ENCODE measurements at regions of chr12 and their contacts with region 1.

Region 1: GRCh38 chr12:104958009-104958945 is at the start of gene SLC41A2:
- DNase-seq: peak; percentile 88
- H3K4me3 Mint-ChIP-seq: peak within 1 kb of the TSS; percentile 86
- H3K27ac Mint-ChIP-seq: peak within 1 kb of the TSS; percentile 77
- H3K4me1 Mint-ChIP-seq: peaks cover 25% of the 10 kb centered on the region
- H3K27me3 Mint-ChIP-seq: peaks cover 3% of the 10 kb centered on the region
- total RNA-seq, gene SLC41A2: 7.6 to 7.7 TPM

Region 2: DNA sequence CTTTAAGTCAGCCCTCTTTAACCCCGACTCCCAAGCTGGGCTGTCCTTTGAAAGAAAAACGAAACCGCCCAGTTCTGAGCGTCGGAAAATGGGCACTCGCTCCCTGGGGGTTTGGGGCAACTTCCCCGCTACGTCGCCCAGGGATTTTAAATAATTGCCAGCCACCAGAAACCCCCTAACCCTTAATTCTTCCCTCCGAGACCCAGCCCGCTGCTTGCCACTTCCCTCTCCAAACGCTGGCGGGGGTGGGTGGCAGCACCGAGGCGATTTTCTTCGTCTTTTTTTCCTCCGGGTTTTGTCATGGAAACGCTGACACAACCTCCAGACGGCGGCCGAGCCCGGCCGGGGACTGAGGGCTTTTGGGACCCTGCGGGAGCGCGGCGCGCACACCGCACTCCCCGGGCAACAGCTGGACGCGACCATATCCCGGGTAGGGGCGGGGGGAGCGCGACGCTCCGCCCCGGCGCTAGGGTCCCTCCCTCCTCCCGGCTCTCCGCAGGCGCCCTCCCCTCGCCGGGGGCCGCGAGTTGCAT is 501.8 kb before region 1 on chr12 and contains the start of gene CHST11:
- CTCF ChIA-PET with region 1: interaction called, 4 read pairs
- POLR2A ChIA-PET with region 1: no interaction called
- intact Hi-C with region 1: loop called (anchors 5 kb)
- DNase-seq: peak; percentile 89
- H3K4me3 Mint-ChIP-seq: peak within 1 kb of the TSS; percentile 99
- H3K27ac Mint-ChIP-seq: peak within 1 kb of the TSS; percentile 97
- H3K4me1 Mint-ChIP-seq: peaks cover 29% of the 10 kb centered on the region
- H3K27me3 Mint-ChIP-seq: no peaks in the 10 kb centered on the region
- total RNA-seq, gene CHST11: 58.3 to 59.0 TPM

Region 3: GRCh38 chr12:104695453-104696148 is 262.7 kb before region 1 on chr12:
- CTCF ChIA-PET with region 1: no interaction called
- POLR2A ChIA-PET with region 1: no interaction called
- intact Hi-C with region 1: loop called (anchors 5 kb)
- DNase-seq: peak; percentile 94
- H3K4me3 Mint-ChIP-seq: peak overlapping the region; percentile 16
- H3K27ac Mint-ChIP-seq: peak overlapping the region; percentile 92
- H3K4me1 Mint-ChIP-seq: peaks cover 74% of the 10 kb centered on the region
- H3K27me3 Mint-ChIP-seq: no peaks in the 10 kb centered on the region

Region 4: GRCh38 chr12:104930388-104931326 is 27.6 kb before region 1 on chr12:
- CTCF ChIA-PET with region 1: interaction called, 11 read pairs
- POLR2A ChIA-PET with region 1: interaction called, 4 read pairs
- intact Hi-C with region 1: loop called (anchors 1 kb)
- DNase-seq: peak; percentile 73
- H3K4me3 Mint-ChIP-seq: no peak overlapping the region
- H3K27ac Mint-ChIP-seq: peak overlapping the region; percentile 39
- H3K4me1 Mint-ChIP-seq: peaks cover 25% of the 10 kb centered on the region
- H3K27me3 Mint-ChIP-seq: no peaks in the 10 kb centered on the region

Region 5: GRCh38 chr12:105030820-105031807 is 72.8 kb after region 1 on chr12:
- CTCF ChIA-PET with region 1: interaction called, 5 read pairs
- POLR2A ChIA-PET with region 1: no interaction called
- intact Hi-C with region 1: loop called (anchors 1 kb)
- DNase-seq: no peak
- H3K4me3 Mint-ChIP-seq: no peak overlapping the region
- H3K27ac Mint-ChIP-seq: peak overlapping the region; percentile 3
- H3K4me1 Mint-ChIP-seq: peaks cover 31% of the 10 kb centered on the region
- H3K27me3 Mint-ChIP-seq: no peaks in the 10 kb centered on the region

Region 6: GRCh38 chr12:105064564-105065178 is 106.4 kb after region 1 on chr12:
- CTCF ChIA-PET with region 1: no interaction called
- POLR2A ChIA-PET with region 1: no interaction called
- intact Hi-C with region 1: no loop called
- DNase-seq: no peak
- H3K4me3 Mint-ChIP-seq: no peak overlapping the region
- H3K27ac Mint-ChIP-seq: no peak overlapping the region
- H3K4me1 Mint-ChIP-seq: no peaks in the 10 kb centered on the region
- H3K27me3 Mint-ChIP-seq: peaks cover 2% of the 10 kb centered on the region

Region 7: DNA sequence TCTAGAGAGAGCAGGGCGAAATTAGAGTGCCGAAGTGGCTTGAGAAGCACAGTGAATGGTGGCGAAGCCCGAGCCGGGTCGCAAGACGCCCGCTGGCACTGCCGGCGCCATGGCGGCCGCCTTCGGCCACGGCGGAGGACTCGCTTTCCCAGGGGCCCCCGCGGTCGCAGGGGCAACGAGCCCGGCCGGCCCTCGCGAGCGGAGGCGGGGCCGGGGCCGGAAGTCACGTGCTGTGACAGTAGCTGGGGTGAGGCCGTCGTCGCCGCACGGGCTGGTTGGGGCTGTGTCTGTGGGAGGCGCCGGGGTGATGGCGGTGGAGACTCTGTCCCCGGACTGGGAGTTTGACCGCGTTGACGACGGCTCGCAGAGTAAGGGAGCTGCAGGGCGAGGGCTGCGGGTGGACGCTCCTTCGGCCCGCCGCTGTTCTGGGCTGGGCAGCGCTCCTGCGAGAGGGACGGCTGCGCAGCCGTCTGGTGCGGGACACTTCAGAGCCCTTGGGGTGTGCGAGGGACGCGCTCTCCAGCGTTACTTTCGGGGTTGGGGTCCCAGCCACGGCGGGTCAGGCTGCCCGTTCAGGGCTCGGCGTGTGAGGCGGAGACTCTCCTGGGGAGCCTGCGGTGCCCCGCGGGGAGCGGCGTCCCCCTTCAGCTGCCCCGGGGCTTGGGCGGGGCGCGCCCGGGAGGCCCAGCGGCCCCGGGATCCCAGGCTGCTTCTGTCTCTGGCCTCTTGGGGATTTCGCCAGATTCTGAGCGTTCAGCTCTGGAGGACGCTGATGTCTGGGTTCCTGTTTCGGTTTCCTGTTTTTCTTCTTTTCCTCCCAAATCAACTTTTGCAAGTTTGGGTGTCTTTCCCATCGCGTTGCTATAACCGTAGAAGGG is 149.5 kb after region 1 on chr12 and contains the start of gene WASHC4:
- CTCF ChIA-PET with region 1: no interaction called
- POLR2A ChIA-PET with region 1: interaction called, 4 read pairs
- intact Hi-C with region 1: loop called (anchors 1 kb)
- DNase-seq: peak; percentile 96
- H3K4me3 Mint-ChIP-seq: peak within 1 kb of the TSS; percentile 90
- H3K27ac Mint-ChIP-seq: peak within 1 kb of the TSS; percentile 88
- H3K4me1 Mint-ChIP-seq: peaks cover 40% of the 10 kb centered on the region
- H3K27me3 Mint-ChIP-seq: peaks cover 11% of the 10 kb centered on the region
- total RNA-seq, gene WASHC4: 34.2 to 36.8 TPM

Region 8: GRCh38 chr12:105245291-105245690 is 287.0 kb after region 1 on chr12:
- CTCF ChIA-PET with region 1: no interaction called
- POLR2A ChIA-PET with region 1: no interaction called
- intact Hi-C with region 1: no loop called
- DNase-seq: no peak
- H3K4me3 Mint-ChIP-seq: no peak overlapping the region
- H3K27ac Mint-ChIP-seq: no peak overlapping the region
- H3K4me1 Mint-ChIP-seq: no peaks in the 10 kb centered on the region
- H3K27me3 Mint-ChIP-seq: peaks cover 13% of the 10 kb centered on the region

Measured in activated CD4-positive, alpha-beta memory T cell treated with anti-CD3 and anti-CD28 coated beads for 36 hours (primary cell).